ENCODE measurements at regions of chr6 and their contacts with region 1.

Region 1: GRCh38 chr6:166419286-166419685 is 36.5 kb upstream of the MPC1 start:
- DNase-seq: peak; percentile 61
- H3K4me3 Mint-ChIP-seq: no peak overlapping the region
- H3K27ac Mint-ChIP-seq: no peak overlapping the region
- H3K4me1 Mint-ChIP-seq: peaks cover 62% of the 10 kb centered on the region
- H3K27me3 Mint-ChIP-seq: peaks cover 4% of the 10 kb centered on the region

Region 2: GRCh38 chr6:166025149-166025898 is 394.0 kb before region 1 on chr6:
- intact Hi-C with region 1: loop called (anchors 10 kb)
- DNase-seq: no peak
- H3K4me3 Mint-ChIP-seq: no peak overlapping the region
- H3K27ac Mint-ChIP-seq: no peak overlapping the region
- H3K4me1 Mint-ChIP-seq: no peaks in the 10 kb centered on the region
- H3K27me3 Mint-ChIP-seq: no peaks in the 10 kb centered on the region

Region 3: DNA sequence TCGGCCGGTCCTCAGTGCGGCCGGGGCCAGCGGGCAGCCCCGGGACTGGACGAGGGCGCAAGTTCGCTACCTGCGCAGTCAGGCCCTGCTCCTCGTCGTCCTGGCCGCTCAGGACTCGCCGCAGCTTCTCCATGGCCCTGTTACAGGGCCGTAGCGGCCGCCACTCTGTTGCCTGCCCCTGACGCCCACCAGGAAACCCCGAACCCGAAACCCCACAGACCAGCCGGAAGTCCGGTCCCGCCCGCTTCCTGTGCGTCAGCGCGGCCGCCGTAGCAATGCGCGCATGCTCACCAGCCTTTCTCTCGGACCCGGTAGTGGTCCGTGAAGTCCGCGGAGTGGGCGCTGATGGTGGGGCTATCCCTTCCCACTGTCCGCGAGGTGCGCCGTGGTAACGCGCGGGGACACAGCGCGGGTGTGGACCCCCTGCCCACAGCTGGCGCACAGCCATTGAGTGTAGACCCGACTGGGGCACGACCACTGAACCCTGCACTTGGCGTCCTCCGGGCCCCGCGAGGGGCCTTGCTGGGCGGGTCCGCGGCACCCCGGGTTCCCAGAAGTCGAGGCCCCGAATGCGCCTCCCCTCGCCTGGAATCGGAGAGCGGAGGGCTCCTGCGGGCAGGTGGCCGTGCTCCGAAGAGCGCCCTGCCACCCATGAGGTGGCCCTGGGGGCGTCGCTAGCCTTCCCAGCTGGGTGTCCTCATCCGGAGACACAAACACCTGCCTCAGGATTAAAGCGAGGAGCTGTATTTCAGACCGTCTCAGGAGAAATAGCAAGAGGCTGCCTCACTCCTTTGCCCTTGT is 76.7 kb before region 1 on chr6 and contains the start of gene SFT2D1:
- intact Hi-C with region 1: loop called (anchors 2 kb)
- DNase-seq: peak; percentile 80
- H3K4me3 Mint-ChIP-seq: peak within 1 kb of the TSS; percentile 89
- H3K27ac Mint-ChIP-seq: peak within 1 kb of the TSS; percentile 88
- H3K4me1 Mint-ChIP-seq: peaks cover 18% of the 10 kb centered on the region
- H3K27me3 Mint-ChIP-seq: peaks cover 13% of the 10 kb centered on the region
- total RNA-seq, gene SFT2D1: 57.6 and 63.3 TPM in 2 replicates

Region 4: DNA sequence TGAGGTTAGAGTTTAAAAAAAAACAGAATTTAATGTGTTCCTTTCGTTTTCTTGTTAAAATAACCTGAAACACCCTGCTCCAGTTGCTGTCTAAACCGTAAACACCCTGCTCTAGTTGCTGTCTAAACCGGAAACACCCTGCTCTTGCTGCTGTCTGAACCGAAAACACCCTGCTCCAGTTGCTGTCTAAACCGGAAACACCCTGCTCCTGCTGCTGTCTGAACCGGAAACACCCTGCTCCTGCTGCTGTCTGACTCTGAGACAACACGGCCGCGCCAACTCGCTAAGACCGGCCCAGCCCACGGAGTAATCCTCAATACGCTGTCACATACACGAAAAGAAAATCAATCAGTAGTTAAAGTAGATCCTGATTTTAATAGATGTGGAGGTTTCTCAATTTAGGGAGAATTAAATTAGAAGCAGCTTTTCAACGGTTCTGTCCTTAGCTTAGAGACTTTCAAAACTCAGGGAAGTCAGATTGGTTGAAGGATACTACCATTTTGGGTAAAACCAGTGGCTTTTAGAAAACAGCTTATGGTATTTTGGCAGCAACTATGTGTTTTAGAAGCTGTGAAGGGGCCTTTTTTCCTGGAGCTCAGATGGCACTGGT is 68.9 kb after region 1 on chr6:
- intact Hi-C with region 1: loop called (anchors 2 kb)
- DNase-seq: peak; percentile 63
- H3K4me3 Mint-ChIP-seq: peak overlapping the region; percentile 51
- H3K27ac Mint-ChIP-seq: peak overlapping the region; percentile 88
- H3K4me1 Mint-ChIP-seq: peaks cover 14% of the 10 kb centered on the region
- H3K27me3 Mint-ChIP-seq: peaks cover 1% of the 10 kb centered on the region

Measured in activated T-helper 1 cell treated with anti-CD3 and anti-CD28 coated beads, Interleukin-12 subunit alpha, Interleukin-12 subunit beta, Interleukin-2, Interleukin-4 antibody, amounts not matched to agents 30 ng/mL and 10 ng/mL and 1 ng/mL, durations not matched to agents 14 hours and 24 hours and 36 hours (primary cell).